ENCODE measurements at regions of chr5 and their contacts with region 1.

Region 1: GRCh38 chr5:151051066-151051930 is 29.5 kb downstream of the TNIP1 start:
- DNase-seq: peak; percentile 59
- ATAC-seq: peak; percentile 89
- H3K4me3 Mint-ChIP-seq: no peak overlapping the region
- H3K27ac Mint-ChIP-seq: peak overlapping the region; percentile 76
- H3K4me1 Mint-ChIP-seq: peaks cover 37% of the 10 kb centered on the region
- H3K27me3 Mint-ChIP-seq: no peaks in the 10 kb centered on the region
- CTCF ChIP-seq: peak; percentile 41

Region 2: DNA sequence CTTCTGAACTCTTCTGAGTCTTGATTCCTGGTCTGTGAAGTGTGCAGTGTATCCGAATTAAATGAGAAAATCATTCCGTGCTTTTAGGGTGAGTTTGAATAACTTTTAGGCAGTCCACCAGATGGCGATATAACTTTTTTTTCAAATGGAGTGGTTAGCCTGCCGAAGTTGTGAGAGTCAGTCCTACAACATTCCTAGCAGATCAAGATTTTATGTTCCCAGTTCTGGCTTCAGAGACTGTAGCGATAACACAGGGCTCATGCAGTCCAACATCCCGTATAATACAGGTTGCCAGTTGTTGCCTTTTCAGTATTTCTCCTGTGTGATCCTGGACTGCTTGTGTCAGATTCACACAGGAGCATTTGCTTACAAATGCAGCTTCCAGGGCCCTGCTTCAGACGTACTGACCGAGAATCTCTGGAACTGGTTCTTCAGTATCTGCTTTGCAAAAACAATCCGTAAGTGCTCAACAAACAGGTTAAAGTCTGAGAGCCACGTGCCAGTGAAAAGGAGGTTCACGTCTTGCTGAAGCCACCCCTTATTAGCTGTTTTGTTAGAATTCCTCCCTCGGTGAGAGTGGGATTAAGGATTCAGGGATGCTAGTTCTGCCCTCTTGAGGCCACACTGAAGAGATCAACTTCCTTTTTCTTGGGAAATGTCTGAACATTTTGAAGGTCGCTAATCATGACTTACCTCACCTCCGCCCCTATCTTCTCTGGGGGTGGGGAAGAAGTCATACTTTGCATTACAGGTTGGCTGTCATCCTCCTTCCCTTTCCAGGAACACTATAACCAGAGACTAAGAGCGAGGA is 250.0 kb before region 1 on chr5:
- CTCF ChIA-PET with region 1: no interaction called
- POLR2A ChIA-PET with region 1: no interaction called
- intact Hi-C with region 1: loop called (anchors 1 kb)
- DNase-seq: no peak
- ATAC-seq: no peak
- H3K4me3 Mint-ChIP-seq: no peak overlapping the region
- H3K27ac Mint-ChIP-seq: no peak overlapping the region
- H3K4me1 Mint-ChIP-seq: no peaks in the 10 kb centered on the region
- H3K27me3 Mint-ChIP-seq: peaks cover 18% of the 10 kb centered on the region
- CTCF ChIP-seq: no peak

Region 3: DNA sequence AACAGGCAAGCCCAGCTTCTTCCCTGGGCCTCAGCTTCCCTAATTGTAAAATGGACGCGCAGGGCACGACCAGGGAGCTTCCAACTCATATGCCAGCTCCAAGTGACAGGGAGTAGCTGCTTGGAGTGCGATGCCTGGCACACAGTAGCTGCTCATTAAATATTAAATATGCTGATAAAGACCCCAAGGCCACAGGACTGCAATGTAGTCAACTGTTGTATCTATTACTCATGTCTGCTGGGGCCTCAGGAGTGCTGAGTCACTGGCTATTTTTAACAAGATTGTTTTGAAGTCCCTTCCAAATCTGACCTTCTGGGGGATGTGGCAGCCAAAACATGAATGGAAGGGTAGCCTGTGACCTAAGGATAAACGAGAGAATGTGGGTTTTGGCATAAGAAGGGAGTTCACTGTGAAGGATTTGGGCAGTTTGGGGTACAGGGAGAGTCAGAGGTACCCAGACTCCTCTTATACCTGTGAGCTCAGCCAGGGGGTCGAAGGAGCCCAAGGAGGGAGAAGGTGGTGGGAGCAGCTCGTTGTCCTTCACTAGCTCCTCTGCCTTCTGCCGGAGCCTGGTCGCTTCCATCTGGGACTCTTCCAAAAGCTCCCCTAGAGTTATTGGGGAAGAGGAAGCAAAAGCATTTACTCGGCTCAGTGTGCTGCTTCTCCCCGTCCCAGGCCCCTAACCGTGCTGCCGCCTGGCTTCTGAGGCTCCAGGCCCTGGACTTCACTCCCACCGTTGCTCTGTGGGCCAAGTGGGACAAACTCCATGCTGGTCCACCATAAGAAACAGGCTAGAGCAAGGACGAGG is 12.0 kb after region 1 on chr5:
- CTCF ChIA-PET with region 1: interaction called, 13 read pairs
- POLR2A ChIA-PET with region 1: interaction called, 5 read pairs
- intact Hi-C with region 1: loop called (anchors 1 kb)
- DNase-seq: no peak
- ATAC-seq: no peak
- H3K4me3 Mint-ChIP-seq: peak overlapping the region; percentile 53
- H3K27ac Mint-ChIP-seq: peak overlapping the region; percentile 89
- H3K4me1 Mint-ChIP-seq: peaks cover 99% of the 10 kb centered on the region
- H3K27me3 Mint-ChIP-seq: no peaks in the 10 kb centered on the region
- CTCF ChIP-seq: no peak

Region 4: DNA sequence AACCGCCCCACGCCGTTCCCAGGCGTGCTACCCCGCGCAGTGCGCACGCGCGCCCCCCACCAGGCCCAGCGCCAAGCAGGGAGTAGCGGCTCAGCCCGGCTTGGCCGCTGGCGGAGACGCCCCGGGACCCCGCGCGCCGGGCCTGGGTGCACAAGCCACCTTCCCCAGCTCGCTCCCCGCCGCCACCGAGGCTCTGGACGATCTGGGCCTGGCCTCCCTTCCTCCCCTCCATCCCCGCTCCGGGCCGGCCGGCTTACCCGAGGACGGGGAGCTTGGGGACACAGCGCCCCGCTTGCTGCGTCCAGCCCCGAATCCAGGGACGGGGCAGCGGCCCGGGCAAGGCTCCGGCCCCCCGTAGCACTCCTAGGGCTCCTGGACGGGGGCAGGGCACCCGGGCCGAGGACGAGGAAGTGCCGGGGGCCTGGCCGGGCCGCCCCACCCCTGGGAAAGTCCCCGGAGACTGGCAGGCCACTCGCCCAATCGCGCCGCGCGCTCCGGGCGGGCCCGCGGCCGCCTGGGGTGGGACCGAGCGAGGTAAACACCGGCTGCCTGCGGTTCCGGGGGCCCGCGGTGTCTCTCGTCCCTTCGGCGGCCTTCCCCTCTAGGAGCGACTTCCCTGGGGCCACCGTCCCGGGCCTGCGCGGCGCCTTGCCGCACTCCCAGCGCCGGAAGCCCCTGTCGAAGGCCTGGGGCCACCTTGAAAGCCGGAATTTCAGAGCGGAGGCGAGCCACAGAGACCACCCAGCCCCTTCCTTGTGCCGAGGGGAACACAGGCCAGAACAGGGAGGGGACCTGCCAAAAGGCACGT is 29.5 kb after region 1 on chr5 and contains the start of gene TNIP1:
- CTCF ChIA-PET with region 1: interaction called, 10 read pairs
- POLR2A ChIA-PET with region 1: interaction called, 215 read pairs
- intact Hi-C with region 1: no loop called
- DNase-seq: peak; percentile 99
- ATAC-seq: peak; percentile 81
- H3K4me3 Mint-ChIP-seq: peak within 1 kb of the TSS; percentile 93
- H3K27ac Mint-ChIP-seq: peak within 1 kb of the TSS; percentile 94
- H3K4me1 Mint-ChIP-seq: peaks cover 88% of the 10 kb centered on the region
- H3K27me3 Mint-ChIP-seq: no peaks in the 10 kb centered on the region
- CTCF ChIP-seq: no peak
- total RNA-seq, gene TNIP1: 506 and 512 TPM in 2 replicates

Region 5: DNA sequence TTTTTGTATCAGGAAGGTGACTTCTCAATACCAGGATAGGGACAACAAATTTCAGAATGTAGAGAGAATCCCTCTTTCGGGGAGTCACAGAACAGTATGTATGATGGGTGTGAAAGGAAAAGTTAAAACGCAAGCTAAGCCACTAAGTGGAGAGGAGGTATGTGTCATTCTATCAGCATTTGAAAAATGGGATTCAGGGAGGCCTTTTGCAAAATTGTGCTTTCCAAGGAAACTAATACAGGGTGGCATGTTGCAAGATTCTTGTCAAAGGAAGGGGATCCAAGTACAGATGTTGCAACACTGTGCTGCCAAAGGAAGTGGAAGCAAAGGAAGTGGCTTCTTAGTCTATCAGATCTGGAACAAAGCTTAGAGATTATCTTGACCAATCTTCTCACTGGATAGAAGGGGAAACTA is 42.2 kb after region 1 on chr5:
- CTCF ChIA-PET with region 1: interaction called, 20 read pairs
- POLR2A ChIA-PET with region 1: interaction called, 6 read pairs
- intact Hi-C with region 1: no loop called
- DNase-seq: no peak
- ATAC-seq: no peak
- H3K4me3 Mint-ChIP-seq: peak overlapping the region; percentile 81
- H3K27ac Mint-ChIP-seq: peak overlapping the region; percentile 94
- H3K4me1 Mint-ChIP-seq: peaks cover 74% of the 10 kb centered on the region
- H3K27me3 Mint-ChIP-seq: no peaks in the 10 kb centered on the region
- CTCF ChIP-seq: no peak

Region 6: DNA sequence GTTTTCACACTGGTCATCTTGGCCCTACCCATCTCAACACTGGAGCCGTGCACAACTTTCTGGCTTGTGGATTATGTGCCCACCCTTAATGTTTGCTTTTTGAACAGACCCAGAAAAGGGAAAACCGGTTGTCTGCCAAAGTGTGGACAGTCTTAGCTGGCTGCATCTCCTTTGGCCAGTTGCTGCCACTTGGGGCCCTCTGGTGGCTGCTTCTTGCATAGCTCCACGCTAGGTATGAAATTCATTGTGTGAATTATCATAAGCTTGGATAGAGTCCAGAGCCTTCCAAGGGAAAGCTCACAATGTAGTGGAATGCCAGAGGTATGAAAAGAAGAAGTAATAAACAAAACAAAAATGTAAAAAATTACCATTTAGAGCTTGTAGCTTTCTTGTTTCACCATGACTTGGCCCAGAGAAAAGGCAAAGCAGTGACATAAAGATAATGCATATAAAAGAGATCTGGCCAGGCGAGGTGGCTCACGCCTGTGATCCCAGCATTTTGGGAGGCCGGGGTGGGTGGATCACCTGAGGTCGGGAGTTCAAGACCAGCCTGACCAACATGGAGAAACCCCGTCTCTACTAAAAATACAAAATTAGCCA is 264.8 kb after region 1 on chr5:
- CTCF ChIA-PET with region 1: interaction called, 8 read pairs
- POLR2A ChIA-PET with region 1: no interaction called
- intact Hi-C with region 1: loop called (anchors 1 kb)
- DNase-seq: peak; percentile 40
- ATAC-seq: peak; percentile 83
- H3K4me3 Mint-ChIP-seq: no peak overlapping the region
- H3K27ac Mint-ChIP-seq: no peak overlapping the region
- H3K4me1 Mint-ChIP-seq: peaks cover 11% of the 10 kb centered on the region
- H3K27me3 Mint-ChIP-seq: peaks cover 5% of the 10 kb centered on the region
- CTCF ChIP-seq: peak; percentile 64

Measured in activated B cell treated with CpG ODN at 0.5 μM for 24 hours (primary cell).